Activated T-helper 1 cell treated with anti-CD3 and anti-CD28 coated beads, Interleukin-12 subunit alpha, Interleukin-12 subunit beta, Interleukin-2, Interleukin-4 antibody, amounts not matched to agents 30 ng/mL and 10 ng/mL and 1 ng/mL, durations not matched to agents 14 hours and 24 hours and 36 hours (primary cell): ENCODE measurements at regions of chr2 and their contacts with region 1.

Region 1: DNA sequence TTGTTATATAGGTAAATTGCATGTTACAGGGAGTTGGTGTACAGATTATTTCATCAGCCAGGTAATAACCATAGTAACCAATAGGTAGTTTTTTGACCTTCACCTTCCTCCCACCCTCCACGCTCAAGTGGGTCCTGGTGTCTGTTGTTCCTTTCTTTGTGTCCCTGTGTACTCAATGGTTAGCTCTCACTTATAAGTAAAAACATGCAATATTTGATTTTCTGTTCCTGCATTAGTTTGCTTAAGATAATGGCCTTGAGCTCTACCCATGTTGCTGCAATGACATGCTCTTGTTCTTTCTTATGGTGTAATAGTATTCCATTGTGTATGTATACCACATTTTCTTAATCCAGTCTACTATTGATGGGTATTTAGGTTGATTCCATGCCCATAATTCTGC is 233.7 kb upstream of the EPC2 start:
- DNase-seq: no peak
- H3K4me3 Mint-ChIP-seq: no peak overlapping the region
- H3K27ac Mint-ChIP-seq: no peak overlapping the region
- H3K4me1 Mint-ChIP-seq: no peaks in the 10 kb centered on the region
- H3K27me3 Mint-ChIP-seq: no peaks in the 10 kb centered on the region

Region 2: GRCh38 chr2:148231858-148232257 is 179.0 kb before region 1 on chr2:
- intact Hi-C with region 1: no loop called
- DNase-seq: no peak
- H3K4me3 Mint-ChIP-seq: no peak overlapping the region
- H3K27ac Mint-ChIP-seq: no peak overlapping the region
- H3K4me1 Mint-ChIP-seq: no peaks in the 10 kb centered on the region
- H3K27me3 Mint-ChIP-seq: no peaks in the 10 kb centered on the region

Region 3: GRCh38 chr2:148338541-148338940 is 72.4 kb before region 1 on chr2:
- intact Hi-C with region 1: no loop called
- DNase-seq: no peak
- H3K4me3 Mint-ChIP-seq: no peak overlapping the region
- H3K27ac Mint-ChIP-seq: no peak overlapping the region
- H3K4me1 Mint-ChIP-seq: no peaks in the 10 kb centered on the region
- H3K27me3 Mint-ChIP-seq: no peaks in the 10 kb centered on the region

Region 4: DNA sequence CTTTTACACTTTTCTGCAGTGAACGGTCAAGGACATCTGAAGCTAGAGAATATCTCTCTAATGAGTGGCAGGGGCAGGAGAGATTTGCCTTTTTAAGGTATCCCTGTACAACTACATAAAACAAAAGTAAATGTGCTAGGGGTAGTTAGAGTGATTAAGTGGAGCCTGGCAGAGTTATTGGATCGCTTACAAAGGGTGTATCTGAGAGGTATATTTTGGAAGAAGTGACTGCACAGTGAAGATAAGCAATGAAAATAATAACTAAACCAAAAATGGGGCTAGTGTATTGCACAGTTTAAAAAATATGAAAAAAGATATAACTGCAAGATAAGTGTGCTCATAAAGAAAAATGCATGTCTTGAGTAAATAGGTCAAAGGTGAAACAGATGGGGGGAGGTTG is 40.1 kb after region 1 on chr2:
- intact Hi-C with region 1: loop called (anchors 1 kb)
- DNase-seq: no peak
- H3K4me3 Mint-ChIP-seq: no peak overlapping the region
- H3K27ac Mint-ChIP-seq: no peak overlapping the region
- H3K4me1 Mint-ChIP-seq: no peaks in the 10 kb centered on the region
- H3K27me3 Mint-ChIP-seq: peaks cover 2% of the 10 kb centered on the region

Region 5: GRCh38 chr2:148552675-148553331 is 141.9 kb after region 1 on chr2:
- intact Hi-C with region 1: no loop called
- DNase-seq: peak; percentile 32
- H3K4me3 Mint-ChIP-seq: no peak overlapping the region
- H3K27ac Mint-ChIP-seq: no peak overlapping the region
- H3K4me1 Mint-ChIP-seq: peaks cover 6% of the 10 kb centered on the region
- H3K27me3 Mint-ChIP-seq: no peaks in the 10 kb centered on the region